ENCODE measurements at regions of chr7 and their contacts with region 1.

Region 1: GRCh38 chr7:155230168-155230593 is 67.5 kb upstream of the INSIG1 start:
- DNase-seq: peak; percentile 96 to 100
- H3K4me3 ChIP-seq: 0 out of 2 replicates have a peak overlapping the region, but pooled peaks have one; percentile 2
- H3K27ac ChIP-seq: peak overlapping the region; percentile 71
- H3K4me1 ChIP-seq: peaks cover 16% of the 10 kb centered on the region
- H3K27me3 ChIP-seq: peaks cover 4% of the 10 kb centered on the region; the same call in 1 of the 2 replicates
- CTCF ChIP-seq: no peak

Region 2: DNA sequence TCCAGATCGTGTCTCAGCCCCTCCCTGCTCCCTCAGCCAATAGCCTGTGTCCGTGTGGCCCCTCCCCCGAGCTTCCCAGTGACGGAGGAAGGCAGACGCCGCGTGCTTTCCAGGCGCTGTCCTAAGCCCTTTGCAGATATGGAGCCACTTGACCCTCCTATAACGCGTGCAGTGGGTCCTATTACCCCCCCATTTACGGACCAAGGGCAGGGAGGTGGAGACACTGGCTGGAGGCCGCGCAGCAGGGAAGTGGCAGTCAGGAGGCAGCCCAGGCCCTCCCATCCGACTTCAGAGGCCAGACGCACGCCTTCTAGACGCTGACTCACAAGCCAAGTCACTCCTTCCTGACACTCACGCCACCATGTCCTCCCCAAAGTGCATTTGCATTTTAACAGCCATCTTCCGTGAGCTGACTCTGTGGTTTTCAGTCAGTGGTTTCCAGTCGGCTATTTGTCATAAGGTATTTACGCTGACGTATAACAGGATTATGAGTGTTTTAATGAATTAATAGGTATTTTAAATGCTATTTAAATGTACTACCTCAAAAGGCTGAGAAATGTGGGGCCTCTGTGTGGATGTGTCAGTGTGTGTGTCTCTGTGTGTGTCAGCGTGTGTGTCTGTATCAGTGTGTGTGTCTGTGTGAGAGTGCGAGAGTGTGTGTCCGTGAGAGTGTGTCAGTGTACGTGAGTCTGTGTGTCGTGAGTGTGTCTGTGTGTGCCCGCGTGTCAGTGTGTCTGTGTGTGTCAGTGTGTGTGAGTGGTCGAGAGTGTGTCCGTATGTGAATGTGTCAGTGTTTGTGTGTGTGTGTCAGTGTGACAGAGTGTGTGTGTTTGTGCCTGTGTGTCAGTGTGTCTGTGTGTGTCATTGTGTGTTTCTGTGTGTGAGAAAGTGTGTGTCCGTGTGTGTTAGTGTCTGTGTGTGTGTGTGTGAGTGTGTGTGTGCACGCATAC is 24.5 kb before region 1 on chr7:
- CTCF ChIA-PET with region 1: no interaction called
- POLR2A ChIA-PET with region 1: interaction called, 5 read pairs
- intact Hi-C with region 1: loop called (anchors 1 kb)
- DNase-seq: peak; percentile 91 to 99
- H3K4me3 ChIP-seq: peak overlapping the region; percentile 53
- H3K27ac ChIP-seq: peak overlapping the region; percentile 90
- H3K4me1 ChIP-seq: peaks cover 44% of the 10 kb centered on the region
- H3K27me3 ChIP-seq: no peaks in the 10 kb centered on the region
- CTCF ChIP-seq: no peak

Region 3: GRCh38 chr7:155213955-155214740 is 16.0 kb before region 1 on chr7:
- CTCF ChIA-PET with region 1: interaction called, 6 read pairs
- POLR2A ChIA-PET with region 1: interaction called, 23 read pairs
- intact Hi-C with region 1: loop called (anchors 1 kb)
- DNase-seq: peak; percentile 69 to 78
- H3K4me3 ChIP-seq: peak overlapping the region; percentile 57
- H3K27ac ChIP-seq: peak overlapping the region; percentile 30
- H3K4me1 ChIP-seq: peaks cover 42% of the 10 kb centered on the region
- H3K27me3 ChIP-seq: no peaks in the 10 kb centered on the region
- CTCF ChIP-seq: no peak

Region 4: DNA sequence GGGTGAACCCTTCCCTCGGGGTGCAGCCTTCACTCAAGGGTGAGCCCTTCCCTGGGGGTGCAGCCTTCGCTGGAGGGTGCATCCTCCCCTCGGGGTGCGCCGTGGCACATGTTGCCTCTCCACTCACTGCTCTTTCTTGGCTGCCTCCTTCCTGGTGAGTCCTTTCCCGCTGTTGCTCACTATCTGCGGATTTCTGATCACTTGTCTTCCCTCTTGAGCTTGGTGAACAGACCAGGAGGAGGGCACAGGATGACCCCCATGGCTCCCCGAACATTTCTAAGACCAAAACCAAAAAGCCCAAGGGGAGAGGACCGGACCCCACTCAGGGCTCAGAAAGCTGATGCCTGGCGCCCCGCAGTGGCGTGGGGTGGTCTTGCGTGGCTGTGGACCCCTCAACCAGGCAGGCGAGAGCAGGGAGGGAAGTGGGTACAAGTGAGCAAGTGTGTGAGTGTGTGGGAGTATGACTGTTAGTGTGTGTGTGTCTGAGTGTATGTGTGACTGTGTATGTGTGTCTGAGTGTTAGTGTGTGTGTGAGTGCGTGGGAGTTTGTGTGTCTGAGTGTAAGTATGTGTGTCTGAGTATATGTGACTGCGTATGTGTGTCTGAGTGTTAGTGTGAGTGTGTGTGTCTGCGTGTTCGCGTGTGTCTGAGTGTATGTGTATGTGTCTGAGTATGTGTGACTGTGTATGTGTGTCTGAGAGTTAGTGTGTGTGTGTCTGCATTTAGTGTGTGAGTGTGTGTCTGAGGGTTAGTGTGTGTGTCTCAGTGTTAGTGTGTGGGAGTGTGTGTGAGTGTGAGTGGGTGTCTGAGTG is 33.4 kb after region 1 on chr7:
- CTCF ChIA-PET with region 1: no interaction called
- POLR2A ChIA-PET with region 1: no interaction called
- intact Hi-C with region 1: loop called (anchors 1 kb)
- DNase-seq: no peak
- H3K4me3 ChIP-seq: no peak overlapping the region
- H3K27ac ChIP-seq: no peak overlapping the region
- H3K4me1 ChIP-seq: peaks cover 16% of the 10 kb centered on the region
- H3K27me3 ChIP-seq: peaks cover 6% of the 10 kb centered on the region; the same call in 1 of the 2 replicates
- CTCF ChIP-seq: no peak; the same call in 1 of the 2 replicates

Region 5: GRCh38 chr7:155269766-155270585 is 39.8 kb after region 1 on chr7:
- CTCF ChIA-PET with region 1: no interaction called
- POLR2A ChIA-PET with region 1: no interaction called
- intact Hi-C with region 1: loop called (anchors 1 kb)
- DNase-seq: peak; percentile 72 to 94
- H3K4me3 ChIP-seq: no peak overlapping the region
- H3K27ac ChIP-seq: peak overlapping the region; percentile 63
- H3K4me1 ChIP-seq: peaks cover 22% of the 10 kb centered on the region
- H3K27me3 ChIP-seq: no peaks in the 10 kb centered on the region
- CTCF ChIP-seq: no peak

Region 6: GRCh38 chr7:155297517-155298287 is 67.5 kb after region 1 on chr7 and contains the start of gene INSIG1:
- CTCF ChIA-PET with region 1: interaction called, 5 read pairs
- POLR2A ChIA-PET with region 1: interaction called, 4 read pairs
- intact Hi-C with region 1: loop called (anchors 1 kb)
- DNase-seq: peak; percentile 83 to 98
- H3K4me3 ChIP-seq: peak within 1 kb of the TSS; percentile 90
- H3K27ac ChIP-seq: peak within 1 kb of the TSS; percentile 81
- H3K4me1 ChIP-seq: peaks cover 42% of the 10 kb centered on the region
- H3K27me3 ChIP-seq: no peaks in the 10 kb centered on the region
- CTCF ChIP-seq: no peak
- total RNA-seq, gene INSIG1: 75.7 and 103 TPM in 2 replicates

Region 7: GRCh38 chr7:155306673-155307470 is 76.7 kb after region 1 on chr7:
- CTCF ChIA-PET with region 1: no interaction called
- POLR2A ChIA-PET with region 1: interaction called, 5 read pairs
- intact Hi-C with region 1: loop called (anchors 1 kb)
- DNase-seq: peak; percentile 51 to 96
- H3K4me3 ChIP-seq: no peak overlapping the region
- H3K27ac ChIP-seq: peak overlapping the region; percentile 38
- H3K4me1 ChIP-seq: peaks cover 22% of the 10 kb centered on the region
- H3K27me3 ChIP-seq: no peaks in the 10 kb centered on the region
- CTCF ChIP-seq: no peak

Measured in PC-9 (cell line).